ENCODE measurements at regions of chr1 and their contacts with region 1.

Region 1: GRCh38 chr1:118960026-118960561 is 28.0 kb downstream of the TBX15 start:
- DNase-seq: peak; percentile 57
- H3K4me3 ChIP-seq: no peak overlapping the region
- H3K27me3 ChIP-seq: no peaks in the 10 kb centered on the region
- CTCF ChIP-seq: no peak

Region 2: GRCh38 chr1:118928739-118929554 is 31.1 kb before region 1 on chr1:
- CTCF ChIA-PET with region 1: no interaction called
- POLR2A ChIA-PET with region 1: no interaction called
- DNase-seq: no peak
- H3K4me3 ChIP-seq: no peak overlapping the region
- H3K27me3 ChIP-seq: no peaks in the 10 kb centered on the region
- CTCF ChIP-seq: no peak

Region 3: DNA sequence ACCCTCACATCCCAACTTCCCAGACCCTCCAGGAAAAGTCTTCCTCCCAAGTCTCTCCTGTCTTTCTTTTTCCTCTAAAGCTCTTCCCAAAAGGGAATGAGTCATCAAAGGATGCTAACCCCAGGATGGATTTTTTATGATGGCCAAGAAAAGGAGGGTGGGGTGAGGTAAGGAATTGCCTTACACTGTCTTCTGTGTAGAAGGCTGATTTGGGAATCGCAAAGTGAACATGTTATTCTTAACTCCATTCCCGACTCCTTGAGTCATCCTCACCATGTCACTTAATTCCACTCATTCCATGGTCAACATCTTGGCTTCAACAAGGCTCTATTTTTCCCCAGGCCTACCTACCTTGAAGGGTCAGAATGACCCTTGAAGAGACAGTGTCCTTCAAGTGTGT is 16.0 kb before region 1 on chr1:
- CTCF ChIA-PET with region 1: interaction called, 3 read pairs
- POLR2A ChIA-PET with region 1: interaction called, 15 read pairs
- DNase-seq: peak; percentile 48
- H3K4me3 ChIP-seq: no peak overlapping the region
- H3K27me3 ChIP-seq: no peaks in the 10 kb centered on the region
- CTCF ChIP-seq: no peak